GM10248 (cell line): ENCODE measurements at regions of chr3 and their contacts with region 1.

Region 1: GRCh38 chr3:170414202-170414663 is 4.4 kb upstream of the CLDN11 start:
- DNase-seq: peak; percentile 63
- CTCF ChIP-seq: peak; percentile 88

Region 2: DNA sequence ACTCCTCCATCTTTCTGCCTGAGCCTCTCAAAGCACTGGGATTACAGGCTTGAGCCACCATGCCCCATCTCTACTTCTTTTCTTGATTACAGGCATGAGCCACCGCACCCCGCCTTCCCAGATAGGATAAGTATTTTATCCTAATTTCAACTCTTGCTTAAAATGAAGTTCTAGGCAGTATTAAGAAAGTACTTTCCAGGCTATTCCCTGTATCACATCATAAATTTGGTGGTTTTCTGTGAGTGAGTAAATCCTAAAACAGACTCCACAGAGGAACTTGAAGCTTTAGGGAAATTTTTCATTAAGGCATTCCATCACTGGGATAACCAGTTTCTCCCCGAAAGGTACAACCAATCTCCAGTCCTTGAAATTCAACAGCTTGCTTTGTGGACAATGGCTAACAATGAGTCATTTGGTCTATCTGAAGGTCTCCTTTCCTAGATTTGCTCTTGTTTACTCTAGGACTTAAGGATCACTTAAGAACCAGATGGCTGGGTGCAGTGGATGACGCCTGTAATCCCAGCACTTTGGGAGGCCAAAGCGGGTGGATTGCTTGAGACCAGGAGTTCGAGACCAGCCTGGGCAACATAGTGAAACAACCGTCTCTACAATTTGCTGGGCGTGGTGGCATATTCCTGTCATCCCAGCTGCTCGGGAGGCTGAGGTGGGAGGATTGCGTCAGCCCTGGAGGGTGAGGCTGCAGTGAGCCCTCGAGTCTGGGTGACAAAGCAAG is 106.4 kb before region 1 on chr3:
- CTCF ChIA-PET with region 1: interaction called, 19 read pairs
- POLR2A ChIA-PET with region 1: no interaction called
- DNase-seq: no peak
- CTCF ChIP-seq: no peak

Region 3: DNA sequence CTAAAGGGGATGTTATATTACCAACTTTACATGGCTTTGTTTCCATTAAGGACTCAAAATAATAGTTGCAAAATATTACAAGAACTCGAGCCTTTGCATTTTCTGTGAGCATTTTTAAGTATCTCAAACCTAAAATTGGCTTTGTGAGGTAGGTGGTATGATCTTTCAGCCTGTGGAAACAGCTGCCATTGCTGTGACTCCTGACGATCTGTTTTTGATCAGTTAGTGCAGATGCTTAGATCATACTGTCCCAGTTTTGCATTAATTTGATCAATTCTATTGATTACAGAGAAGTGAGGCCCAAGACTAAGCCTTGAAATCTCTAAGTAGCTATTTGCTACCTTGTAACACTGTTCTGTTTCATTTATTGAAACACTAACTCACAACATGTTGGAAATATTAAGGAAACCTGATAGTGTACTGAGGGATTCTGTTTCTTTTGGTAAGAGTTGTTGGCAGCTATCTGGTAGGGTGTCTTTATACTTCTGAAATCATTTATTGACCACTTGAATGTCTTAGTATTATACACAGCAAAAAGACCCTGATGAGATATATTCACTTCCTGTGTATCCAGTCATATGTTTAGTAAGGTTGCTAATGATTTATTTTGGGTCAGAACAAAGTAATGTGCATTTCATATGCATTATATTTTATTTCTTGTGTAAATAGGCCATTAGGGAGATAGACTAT is 41.9 kb before region 1 on chr3:
- CTCF ChIA-PET with region 1: interaction called, 11 read pairs
- POLR2A ChIA-PET with region 1: no interaction called
- DNase-seq: no peak
- CTCF ChIP-seq: no peak

Region 4: DNA sequence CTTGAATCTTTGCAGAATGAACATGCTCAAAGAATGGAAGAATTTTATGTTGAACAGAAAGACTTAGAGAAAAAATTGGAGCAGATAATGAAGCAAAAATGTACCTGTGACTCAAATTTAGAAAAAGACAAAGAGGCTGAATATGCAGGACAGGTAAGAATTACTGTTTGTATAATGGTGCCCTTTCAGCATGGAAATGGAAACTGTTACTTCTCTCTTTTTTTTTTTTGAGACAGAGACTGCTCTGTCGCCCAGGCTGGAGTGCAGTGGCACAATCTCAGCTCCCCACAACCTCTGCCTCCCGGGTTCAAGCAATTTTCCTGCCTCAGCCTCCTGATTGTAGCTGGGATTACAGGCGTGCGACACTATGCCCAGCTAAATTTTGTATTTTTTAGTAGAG is 23.1 kb before region 1 on chr3:
- CTCF ChIA-PET with region 1: interaction called, 29 read pairs
- POLR2A ChIA-PET with region 1: no interaction called
- DNase-seq: no peak
- CTCF ChIP-seq: no peak

Region 5: DNA sequence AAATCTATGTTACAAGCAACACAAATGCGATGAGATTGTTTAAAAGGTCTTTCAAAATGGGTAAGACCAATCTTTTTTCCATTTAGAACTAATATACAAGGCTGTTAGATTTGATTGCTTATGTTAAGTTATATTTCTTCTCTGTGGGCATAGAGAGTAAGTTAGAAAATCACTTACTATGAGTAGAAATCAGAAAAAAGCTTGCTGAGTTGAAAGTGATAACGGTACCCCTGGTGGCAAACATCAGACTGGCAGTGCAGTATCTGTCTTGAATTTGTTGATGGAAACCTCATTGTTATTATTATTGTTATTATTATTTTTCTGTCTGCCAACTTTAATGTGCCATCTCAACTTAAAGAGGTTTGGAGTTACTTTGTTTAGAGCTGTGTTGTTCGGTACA is 16.8 kb after region 1 on chr3:
- CTCF ChIA-PET with region 1: interaction called, 26 read pairs
- POLR2A ChIA-PET with region 1: no interaction called
- DNase-seq: no peak
- CTCF ChIP-seq: no peak

Region 6: GRCh38 chr3:170689893-170690660 is 275.8 kb after region 1 on chr3:
- CTCF ChIA-PET with region 1: interaction called, 29 read pairs
- POLR2A ChIA-PET with region 1: no interaction called
- DNase-seq: peak; percentile 60
- CTCF ChIP-seq: peak; percentile 76

Region 7: DNA sequence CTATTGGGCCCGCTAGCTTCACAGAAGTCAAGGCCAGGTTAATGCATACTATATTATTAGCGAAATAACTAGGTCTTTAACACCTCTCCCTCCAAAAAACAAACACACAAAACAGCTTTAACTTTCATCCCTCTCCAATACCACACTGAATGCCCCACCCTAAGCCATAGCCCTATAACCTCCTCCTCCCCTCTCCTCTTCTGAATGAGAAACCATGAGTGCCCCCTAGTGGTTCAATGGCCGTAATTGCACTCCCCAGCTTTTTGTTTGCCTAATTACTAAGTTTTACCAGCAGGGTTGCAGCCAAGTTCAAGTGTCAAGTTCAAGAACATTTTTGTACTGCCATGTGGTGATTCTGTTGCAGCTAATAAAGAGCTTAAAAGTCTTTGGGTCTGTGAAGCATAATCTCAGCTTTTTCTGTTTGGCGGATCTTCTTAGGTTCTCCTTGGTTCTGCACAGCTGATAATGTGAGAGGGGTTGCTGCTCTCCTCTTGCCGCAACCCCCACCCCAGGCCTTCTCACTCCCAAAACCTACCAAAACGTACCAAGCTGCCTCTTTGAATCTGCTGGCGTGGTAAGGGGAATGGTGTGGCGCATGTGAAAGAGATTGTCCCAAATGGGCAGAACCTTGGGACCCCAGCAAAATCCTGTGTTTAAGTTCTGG is 397.8 kb after region 1 on chr3:
- CTCF ChIA-PET with region 1: interaction called, 224 read pairs
- POLR2A ChIA-PET with region 1: no interaction called
- DNase-seq: peak; percentile 77
- CTCF ChIP-seq: peak; percentile 93